Right ventricle myocardium inferior (tissue), 1 donor: ENCODE measurements at regions of chr1 and their contacts with region 1.

Region 1: GRCh38 chr1:90964444-90965035 is 57.3 kb downstream of the ZNF644 start:
- DNase-seq: no peak
- ATAC-seq: no peak

Region 2: GRCh38 chr1:90579212-90579802 is 385.2 kb before region 1 on chr1:
- intact Hi-C with region 1: loop called (anchors 5 kb)
- DNase-seq: no peak
- ATAC-seq: no peak

Region 3: GRCh38 chr1:90721210-90722194 is 243.0 kb before region 1 on chr1:
- intact Hi-C with region 1: loop called (anchors 10 kb)
- DNase-seq: no peak
- ATAC-seq: no peak

Region 4: DNA sequence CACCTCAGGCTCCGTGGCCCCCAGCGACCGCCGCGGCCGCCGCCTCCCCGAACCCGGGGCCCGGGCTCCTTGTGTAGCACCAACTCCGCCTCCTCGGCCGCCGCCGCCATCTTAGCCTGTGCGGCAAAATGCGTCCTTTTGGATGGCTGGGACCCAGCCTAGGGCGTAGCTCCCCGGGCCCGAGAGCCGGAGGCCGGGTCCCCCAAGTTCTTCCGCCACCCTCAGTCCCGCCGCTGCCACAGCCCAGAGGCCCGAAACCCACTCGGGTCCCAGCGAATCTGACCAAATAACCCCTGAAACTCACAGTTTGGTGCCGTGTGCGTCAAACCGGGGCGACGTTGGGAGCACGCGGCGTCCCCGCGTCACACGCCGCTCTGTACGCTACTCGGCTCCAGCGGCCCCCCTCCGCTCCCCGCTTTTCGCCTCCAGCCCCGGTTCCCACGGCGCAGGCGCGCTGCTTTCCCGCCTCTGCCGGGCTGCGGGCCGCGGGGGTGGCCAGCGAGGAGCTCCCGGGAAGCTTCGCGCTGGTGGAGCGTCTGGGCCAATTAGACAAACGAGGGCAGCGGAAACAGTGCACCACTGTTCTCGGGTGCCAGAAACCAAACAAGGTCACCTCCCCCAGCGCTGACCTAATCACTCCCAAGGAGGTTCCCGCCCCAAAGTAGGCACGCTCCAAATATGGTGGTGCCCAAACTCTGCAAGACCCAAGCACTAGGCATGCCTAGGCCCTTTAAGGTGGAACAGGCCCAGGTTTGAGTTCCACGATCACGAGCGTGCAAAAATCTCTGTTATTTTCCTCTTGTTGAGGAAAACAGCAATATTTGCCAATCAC is 57.4 kb after region 1 on chr1 and contains the start of gene ZNF644:
- intact Hi-C with region 1: loop called (anchors 10 kb)
- DNase-seq: peak; percentile 94
- ATAC-seq: peak; percentile 97
- total RNA-seq, gene ZNF644: 27.7 TPM